ENCODE measurements at regions of chr2 and their contacts with region 1.

Region 1: GRCh38 chr2:203238704-203239526 is at the start of gene CYP20A1:
- DNase-seq: peak; percentile 96
- H3K4me3 ChIP-seq: peak within 1 kb of the TSS; percentile 75
- H3K27ac ChIP-seq: peak within 1 kb of the TSS; percentile 86
- H3K4me1 ChIP-seq: peaks cover 14% of the 10 kb centered on the region
- CTCF ChIP-seq: peak; percentile 52
- total RNA-seq, gene CYP20A1: 14.7 and 15.5 TPM in 2 replicates

Region 2: DNA sequence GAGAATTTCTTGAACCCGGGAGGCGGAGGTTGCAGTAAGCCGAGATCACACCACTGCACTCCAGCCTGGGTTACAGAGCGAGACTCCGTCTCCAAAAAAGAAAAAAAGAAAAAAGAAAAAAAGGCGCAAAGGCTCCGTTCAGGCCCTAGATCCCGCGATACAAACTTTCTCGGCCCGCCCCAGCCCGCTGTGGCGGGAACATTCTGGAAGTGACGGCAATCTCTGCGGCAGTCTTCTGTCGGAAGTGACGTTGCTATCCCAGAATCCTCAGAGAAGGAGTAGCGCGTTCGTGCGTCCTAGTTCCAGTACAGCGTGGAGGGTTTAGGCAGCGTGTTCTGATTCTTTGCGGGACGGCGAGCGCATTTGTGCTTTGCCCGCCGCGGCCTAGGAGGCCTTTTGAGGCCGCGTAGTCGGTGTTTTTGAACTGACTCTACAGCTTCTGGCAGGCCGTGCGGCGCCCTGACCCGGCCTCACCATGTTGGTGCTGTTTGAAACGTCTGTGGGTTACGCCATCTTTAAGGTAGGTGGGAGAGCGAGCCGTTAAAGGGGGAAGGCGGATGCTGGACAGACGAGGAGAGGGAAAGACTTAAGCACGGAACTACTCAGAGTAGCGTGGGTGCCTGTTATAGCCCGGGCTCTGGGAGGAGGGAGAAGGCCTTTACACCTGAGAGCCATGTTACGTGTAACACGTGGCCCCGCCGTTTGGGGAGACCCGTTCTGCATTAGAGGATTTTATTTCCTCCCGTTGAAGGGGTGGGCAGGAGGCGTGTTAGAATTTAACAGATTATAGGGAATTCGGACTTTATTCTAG is 973.2 kb before region 1 on chr2 and contains the start of gene NOP58:
- CTCF ChIA-PET with region 1: no interaction called
- POLR2A ChIA-PET with region 1: no interaction called
- intact Hi-C with region 1: loop called (anchors 5 kb)
- DNase-seq: peak; percentile 97
- H3K4me3 ChIP-seq: peak within 1 kb of the TSS; percentile 90
- H3K27ac ChIP-seq: peak within 1 kb of the TSS; percentile 87
- H3K4me1 ChIP-seq: peaks cover 31% of the 10 kb centered on the region
- CTCF ChIP-seq: no peak
- total RNA-seq, gene NOP58: 124 and 145 TPM in 2 replicates

Region 3: DNA sequence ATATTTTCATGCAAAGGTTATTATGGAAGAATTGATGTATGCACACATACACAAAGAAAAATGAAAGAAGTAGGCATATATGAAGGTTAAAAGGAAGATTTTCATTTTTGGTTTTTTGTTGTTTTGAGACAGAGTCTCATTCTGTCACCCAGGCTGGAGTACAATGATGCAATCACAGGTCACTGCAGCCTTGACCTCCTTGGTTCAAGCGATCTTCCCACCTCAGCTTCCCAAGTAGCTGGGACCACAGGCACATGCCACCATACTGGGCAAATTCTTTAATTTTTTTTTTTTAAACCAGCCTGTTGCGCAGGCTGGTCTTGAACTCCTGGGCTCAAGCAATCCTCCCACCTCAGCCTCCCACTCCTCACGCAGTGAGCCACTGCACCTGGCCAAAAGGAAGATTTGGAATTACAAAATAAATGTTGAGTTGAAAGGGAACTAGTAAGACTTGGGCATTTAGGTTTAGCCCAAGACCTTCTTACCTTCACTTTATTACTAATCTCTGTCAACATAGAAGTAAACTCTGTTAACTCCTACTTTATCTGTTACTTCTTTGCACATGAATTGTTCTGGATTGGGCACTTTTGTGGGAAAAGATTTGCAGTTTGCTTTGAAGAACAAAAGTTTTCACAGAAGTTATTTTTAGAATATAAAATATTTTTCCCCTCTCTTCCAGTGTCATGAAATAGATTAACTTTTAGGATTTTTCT is 256.0 kb before region 1 on chr2:
- CTCF ChIA-PET with region 1: no interaction called
- POLR2A ChIA-PET with region 1: no interaction called
- intact Hi-C with region 1: no loop called
- DNase-seq: no peak
- H3K4me3 ChIP-seq: no peak overlapping the region
- H3K27ac ChIP-seq: no peak overlapping the region
- H3K4me1 ChIP-seq: no peaks in the 10 kb centered on the region
- CTCF ChIP-seq: no peak

Region 4: DNA sequence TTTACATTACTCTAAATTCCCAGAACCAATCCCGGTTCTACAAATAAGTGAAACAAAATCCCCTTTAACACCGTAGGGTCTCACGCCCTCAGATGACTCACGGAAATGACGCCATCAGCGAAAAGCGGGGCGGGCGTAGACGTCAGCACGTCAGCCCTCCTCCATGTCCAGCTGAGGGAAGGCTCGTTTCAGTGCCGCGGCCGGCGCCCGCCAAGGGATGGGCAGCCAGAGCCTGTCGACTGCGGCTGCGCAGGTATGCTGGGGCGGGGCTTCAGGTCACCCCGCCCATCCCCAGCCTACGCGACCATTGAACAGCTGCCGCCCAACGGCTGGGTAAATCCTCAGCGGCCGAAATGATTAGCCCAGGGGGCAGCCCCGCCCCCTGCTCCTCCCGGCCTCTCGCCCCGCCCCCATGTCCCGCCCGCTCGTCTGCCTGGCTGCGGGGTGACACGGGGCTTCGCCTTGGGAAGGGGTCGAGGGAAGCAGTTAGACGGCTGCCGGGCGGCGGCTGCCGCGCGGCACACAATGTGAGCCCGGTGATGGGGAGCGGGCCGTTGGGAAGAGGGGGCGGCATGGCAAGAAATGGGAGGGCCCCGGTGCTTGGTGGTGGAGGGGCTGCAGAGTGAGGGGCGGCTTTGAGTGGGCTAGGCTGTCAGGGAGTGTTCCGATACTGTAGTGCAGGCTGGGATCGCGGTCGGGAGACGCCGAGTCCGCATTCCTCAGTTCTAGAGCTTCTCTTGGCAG is 224.3 kb before region 1 on chr2 and contains the start of gene NBEAL1:
- CTCF ChIA-PET with region 1: no interaction called
- POLR2A ChIA-PET with region 1: no interaction called
- intact Hi-C with region 1: loop called (anchors 2 kb)
- DNase-seq: peak; percentile 96
- H3K4me3 ChIP-seq: peak within 1 kb of the TSS; percentile 76
- H3K27ac ChIP-seq: no peak within 1 kb of the TSS
- H3K4me1 ChIP-seq: peaks cover 19% of the 10 kb centered on the region
- CTCF ChIP-seq: no peak
- total RNA-seq, gene NBEAL1: 5.3 and 5.9 TPM in 2 replicates

Region 5: GRCh38 chr2:203352604-203353260 is 113.8 kb after region 1 on chr2:
- CTCF ChIA-PET with region 1: no interaction called
- POLR2A ChIA-PET with region 1: no interaction called
- intact Hi-C with region 1: no loop called
- DNase-seq: no peak
- H3K4me3 ChIP-seq: no peak overlapping the region
- H3K27ac ChIP-seq: no peak overlapping the region
- H3K4me1 ChIP-seq: peaks cover 5% of the 10 kb centered on the region
- CTCF ChIP-seq: no peak

Region 6: GRCh38 chr2:203427061-203427460 is 188.1 kb after region 1 on chr2:
- CTCF ChIA-PET with region 1: no interaction called
- POLR2A ChIA-PET with region 1: no interaction called
- intact Hi-C with region 1: loop called (anchors 5 kb)
- DNase-seq: no peak
- H3K4me3 ChIP-seq: no peak overlapping the region
- H3K27ac ChIP-seq: no peak overlapping the region
- H3K4me1 ChIP-seq: peaks cover 16% of the 10 kb centered on the region
- CTCF ChIP-seq: no peak

Region 7: DNA sequence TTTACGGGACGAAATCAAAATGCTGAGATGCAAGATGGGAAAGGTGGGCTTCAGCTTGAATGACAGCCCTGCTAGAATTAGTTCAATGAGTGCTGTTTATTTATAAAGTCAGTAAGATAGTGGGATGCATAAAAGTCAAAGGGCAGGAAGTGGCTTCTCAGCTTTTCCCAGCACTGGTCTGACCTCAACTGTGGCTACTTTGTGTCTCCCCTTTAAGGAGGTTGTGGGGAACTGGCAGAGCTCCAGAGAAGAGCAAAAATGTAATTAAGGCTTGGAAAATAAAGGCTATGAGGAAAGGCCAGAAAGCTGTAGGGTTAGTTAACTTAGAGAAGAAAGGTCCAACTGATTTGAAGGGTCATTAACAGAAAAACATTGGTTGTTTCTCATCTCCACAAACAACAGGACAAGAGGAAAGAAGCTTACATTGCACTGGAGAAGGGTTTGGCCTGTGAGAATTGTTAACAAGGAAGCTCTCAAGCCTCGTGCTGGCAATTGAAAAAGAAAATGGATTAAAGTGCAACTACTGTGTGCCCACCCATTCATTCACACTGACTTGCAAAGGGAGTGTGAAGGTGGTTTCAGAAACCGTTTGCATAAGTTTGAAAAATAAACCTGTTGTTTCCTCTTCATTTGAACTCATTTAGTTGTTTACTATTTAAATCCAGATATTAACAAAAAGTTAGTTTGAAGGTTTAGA is 398.7 kb after region 1 on chr2:
- CTCF ChIA-PET with region 1: no interaction called
- POLR2A ChIA-PET with region 1: no interaction called
- intact Hi-C with region 1: no loop called
- DNase-seq: no peak
- H3K4me3 ChIP-seq: no peak overlapping the region
- H3K27ac ChIP-seq: no peak overlapping the region
- H3K4me1 ChIP-seq: peaks cover 16% of the 10 kb centered on the region
- CTCF ChIP-seq: no peak

Region 8: DNA sequence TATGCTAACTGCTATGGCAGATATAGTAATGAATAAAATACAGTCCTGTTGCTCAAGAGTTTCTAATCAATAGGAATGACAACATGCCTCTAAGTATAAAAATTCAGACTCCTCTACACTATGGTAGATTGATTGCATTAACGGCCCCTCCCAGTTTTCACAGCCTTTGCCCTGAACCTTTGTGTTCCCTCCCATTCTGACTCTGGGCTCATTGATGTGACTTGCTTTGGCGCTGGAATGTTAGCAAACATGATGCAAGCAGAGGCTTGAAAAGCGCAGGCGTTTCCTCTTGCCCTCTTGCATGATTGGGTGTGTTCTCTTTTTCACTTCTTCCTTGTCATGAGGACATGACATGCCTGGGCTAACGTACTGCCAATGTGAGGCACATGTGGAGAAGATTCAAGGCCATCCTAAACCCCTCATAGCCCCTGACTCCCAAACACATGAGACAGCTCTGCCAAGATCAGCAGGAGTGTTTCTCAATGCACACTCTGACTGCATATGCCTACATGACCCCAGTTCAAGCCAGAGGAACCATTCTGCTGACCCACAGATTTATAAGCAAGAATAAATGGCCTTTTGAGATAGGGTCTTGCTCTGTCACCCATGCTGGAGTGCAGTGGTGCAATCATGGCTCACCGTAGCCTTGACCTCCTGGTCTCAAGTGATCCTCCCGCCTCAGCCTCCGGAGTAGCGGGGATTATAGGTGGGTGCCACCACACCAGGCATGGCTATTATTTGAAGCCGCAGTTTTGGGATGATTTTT is 417.8 kb after region 1 on chr2:
- CTCF ChIA-PET with region 1: no interaction called
- POLR2A ChIA-PET with region 1: interaction called, 3 read pairs
- intact Hi-C with region 1: loop called (anchors 5 kb)
- DNase-seq: peak; percentile 67
- H3K4me3 ChIP-seq: no peak overlapping the region
- H3K27ac ChIP-seq: peak overlapping the region; percentile 18
- H3K4me1 ChIP-seq: peaks cover 72% of the 10 kb centered on the region
- CTCF ChIP-seq: no peak